ENCODE measurements at regions of chr2 and their contacts with region 1.

Region 1: GRCh38 chr2:65186872-65187851 is 40.5 kb upstream of the ACTR2 start:
- DNase-seq: peak; percentile 34
- H3K4me3 ChIP-seq: no peak overlapping the region
- CTCF ChIP-seq: peak; percentile 81

Region 2: GRCh38 chr2:65064728-65065552 is 122.2 kb before region 1 on chr2:
- CTCF ChIA-PET with region 1: interaction called, 32 read pairs
- POLR2A ChIA-PET with region 1: no interaction called
- DNase-seq: peak; percentile 76
- H3K4me3 ChIP-seq: no peak overlapping the region; the same call in 1 of the 2 replicates
- CTCF ChIP-seq: peak; percentile 57

Region 3: DNA sequence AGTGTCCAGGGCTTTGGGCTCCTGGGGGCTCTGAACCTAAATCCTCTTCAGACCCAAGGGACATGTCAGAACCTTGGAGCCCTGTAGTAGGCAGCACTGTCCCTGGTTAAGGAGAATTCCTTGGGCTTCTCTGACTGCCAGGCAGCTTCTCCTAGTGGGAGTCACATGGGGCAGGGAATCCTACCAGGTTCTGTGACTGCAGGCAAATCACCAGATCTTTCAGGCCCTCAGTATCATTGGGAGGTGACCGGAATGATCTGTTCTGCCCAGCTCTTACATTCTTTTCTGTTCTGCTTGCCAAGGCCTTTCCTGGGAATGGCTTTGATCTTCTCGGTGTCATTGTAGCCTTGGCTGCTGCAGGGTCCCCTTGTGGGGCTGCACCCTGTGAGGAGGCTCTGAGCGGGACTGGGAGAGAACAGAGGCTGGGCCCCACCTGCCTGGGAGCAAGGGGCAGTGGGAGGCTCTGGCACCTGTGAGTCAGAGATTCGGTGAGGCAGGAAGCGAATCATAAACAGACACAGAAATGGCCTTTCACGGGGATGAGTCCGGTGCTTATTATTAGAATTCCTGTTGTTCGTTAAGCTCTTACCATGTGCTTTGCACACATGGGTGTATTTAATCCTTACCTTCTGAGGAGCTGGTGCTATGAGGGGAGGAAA is 116.9 kb before region 1 on chr2:
- CTCF ChIA-PET with region 1: interaction called, 32 read pairs
- POLR2A ChIA-PET with region 1: no interaction called
- DNase-seq: no peak
- H3K4me3 ChIP-seq: no peak overlapping the region
- CTCF ChIP-seq: peak; percentile 24

Region 4: GRCh38 chr2:65159906-65160305 is 27.3 kb before region 1 on chr2:
- CTCF ChIA-PET with region 1: interaction called, 11 read pairs
- POLR2A ChIA-PET with region 1: no interaction called
- DNase-seq: no peak
- H3K4me3 ChIP-seq: no peak overlapping the region
- CTCF ChIP-seq: no peak

Region 5: DNA sequence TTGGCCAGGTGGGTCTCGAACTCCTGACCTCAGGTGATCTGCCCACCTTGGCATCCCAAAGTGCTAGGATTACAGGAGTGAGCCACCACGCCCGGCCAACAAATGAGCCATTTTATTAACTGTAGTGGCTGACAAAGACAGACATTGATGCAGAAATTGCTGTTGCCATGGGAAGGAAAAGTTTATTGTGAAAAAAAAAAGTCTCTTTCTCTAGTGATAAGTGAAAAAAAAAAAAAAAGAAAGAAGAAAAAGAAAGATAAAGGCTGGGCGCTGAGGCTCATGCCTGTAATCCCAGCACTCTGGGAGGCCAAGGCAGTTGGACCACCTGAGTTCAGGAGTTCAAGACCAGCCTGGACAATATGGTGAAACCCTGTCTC is 17.4 kb before region 1 on chr2:
- CTCF ChIA-PET with region 1: interaction called, 62 read pairs
- POLR2A ChIA-PET with region 1: no interaction called
- DNase-seq: no peak
- H3K4me3 ChIP-seq: no peak overlapping the region
- CTCF ChIP-seq: no peak

Region 6: GRCh38 chr2:65198737-65199136 is 11.6 kb after region 1 on chr2:
- CTCF ChIA-PET with region 1: interaction called, 52 read pairs
- POLR2A ChIA-PET with region 1: no interaction called
- DNase-seq: no peak
- H3K4me3 ChIP-seq: no peak overlapping the region
- CTCF ChIP-seq: no peak

Region 7: DNA sequence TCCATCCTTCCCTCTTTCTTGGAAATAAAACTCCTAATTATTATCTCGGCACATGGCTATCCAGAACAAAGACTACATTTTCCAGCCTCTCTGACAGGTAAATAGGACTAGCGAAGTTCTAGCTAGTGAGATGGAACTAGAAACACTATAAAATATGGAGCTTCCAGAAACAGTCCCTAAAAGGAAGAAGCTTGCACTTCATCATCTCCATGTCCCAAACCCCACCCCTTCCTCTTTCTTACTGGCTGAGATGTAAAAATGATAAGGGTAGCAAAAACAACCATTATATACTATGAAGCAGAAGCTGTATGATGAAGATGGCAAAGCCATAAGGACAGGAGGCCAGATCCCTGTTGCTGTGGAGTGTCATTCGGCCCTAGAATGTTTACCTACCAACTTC is 28.8 kb after region 1 on chr2:
- CTCF ChIA-PET with region 1: interaction called, 17 read pairs
- POLR2A ChIA-PET with region 1: no interaction called
- DNase-seq: no peak
- H3K4me3 ChIP-seq: no peak overlapping the region
- CTCF ChIP-seq: no peak

Region 8: DNA sequence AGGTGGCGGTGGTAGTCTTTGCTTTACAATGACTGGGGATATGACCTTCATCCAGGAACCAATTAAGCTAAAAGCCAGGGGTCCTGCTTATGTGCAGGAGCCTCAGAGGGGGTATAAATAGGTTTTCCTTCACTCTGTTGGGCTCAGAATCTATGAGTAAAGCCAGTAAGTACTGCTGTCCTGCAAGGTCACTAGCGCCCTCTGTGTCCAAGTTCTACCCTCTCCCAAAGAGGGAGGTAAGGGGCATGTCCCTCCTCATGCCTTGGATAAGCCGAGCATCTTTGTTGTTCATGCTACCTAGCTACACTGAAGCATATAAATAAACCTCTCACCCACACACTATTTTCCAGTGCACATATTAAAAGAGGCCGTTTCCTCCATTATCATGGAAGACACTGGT is 165.9 kb after region 1 on chr2:
- CTCF ChIA-PET with region 1: no interaction called
- POLR2A ChIA-PET with region 1: no interaction called
- DNase-seq: no peak
- H3K4me3 ChIP-seq: no peak overlapping the region
- CTCF ChIP-seq: no peak

Region 9: GRCh38 chr2:65366595-65367125 is 179.5 kb after region 1 on chr2:
- CTCF ChIA-PET with region 1: no interaction called
- POLR2A ChIA-PET with region 1: no interaction called
- DNase-seq: peak; percentile 91
- H3K4me3 ChIP-seq: peak overlapping the region; percentile 49
- CTCF ChIP-seq: no peak